Calu3 (cell line): ENCODE measurements at regions of chr21 and their contacts with region 1.

Region 1: DNA sequence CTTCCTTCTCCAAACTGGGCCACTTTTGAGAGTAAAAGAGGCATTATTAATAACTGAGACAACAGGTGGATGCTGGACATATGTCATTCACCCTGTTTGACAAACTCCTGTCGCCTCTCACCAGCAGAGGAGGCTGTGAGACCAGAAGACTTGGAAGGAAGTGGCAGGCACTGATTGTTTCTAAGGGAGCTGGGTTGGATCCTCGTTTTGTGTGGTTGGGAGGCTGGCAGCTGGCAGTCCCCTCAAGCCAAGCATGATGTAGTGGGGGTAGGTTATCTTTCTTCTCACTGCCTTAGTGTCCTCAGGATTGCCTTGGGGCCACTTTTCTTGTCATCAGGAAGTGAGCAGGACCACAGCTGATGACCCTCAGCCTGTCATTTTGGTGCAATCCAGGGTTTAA is 86.5 kb upstream of the KCNJ15 start:
- DNase-seq: peak; percentile 52
- H3K4me3 Mint-ChIP-seq: no peak overlapping the region
- H3K27ac Mint-ChIP-seq: no peak overlapping the region
- H3K4me1 Mint-ChIP-seq: peaks cover 27% of the 10 kb centered on the region
- H3K27me3 Mint-ChIP-seq: no peaks in the 10 kb centered on the region
- CTCF ChIP-seq: no peak

Region 2: GRCh38 chr21:38241029-38241740 is 70.9 kb after region 1 on chr21:
- CTCF ChIA-PET with region 1: interaction called, 4 read pairs
- intact Hi-C with region 1: loop called (anchors 2 kb)
- DNase-seq: peak; percentile 56
- H3K4me3 Mint-ChIP-seq: no peak overlapping the region
- H3K27ac Mint-ChIP-seq: peak overlapping the region; percentile 39
- H3K4me1 Mint-ChIP-seq: peaks cover 34% of the 10 kb centered on the region
- H3K27me3 Mint-ChIP-seq: no peaks in the 10 kb centered on the region
- CTCF ChIP-seq: no peak

Region 3: DNA sequence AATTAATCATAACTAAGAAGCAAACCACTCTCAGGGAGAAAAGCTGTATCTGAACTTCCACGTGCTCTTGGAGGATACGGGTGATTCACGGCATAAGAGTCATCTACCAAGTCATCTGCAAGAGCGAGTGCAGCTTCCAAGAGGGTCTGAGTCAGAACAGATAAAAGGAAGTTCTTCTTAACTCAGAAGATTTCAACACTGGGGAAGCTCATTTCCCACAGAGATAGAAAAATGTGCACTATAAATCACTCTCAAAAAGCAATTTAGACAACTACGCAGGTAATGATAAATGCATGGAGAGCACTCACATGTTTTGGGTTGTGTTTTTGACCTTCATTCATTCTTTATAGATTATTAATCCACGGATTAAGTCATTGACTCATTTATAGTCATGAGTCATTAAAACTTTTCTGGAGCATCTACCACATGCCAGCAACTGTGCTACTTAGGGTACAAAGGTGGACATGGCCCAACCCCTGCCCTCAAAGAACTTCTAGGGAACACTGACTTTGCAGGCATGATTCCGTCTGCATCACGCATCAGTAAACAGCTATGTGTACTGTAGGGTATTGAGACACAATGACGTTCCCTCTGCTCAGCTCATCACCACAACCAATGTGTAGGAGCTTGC is 107.3 kb after region 1 on chr21:
- CTCF ChIA-PET with region 1: no interaction called
- intact Hi-C with region 1: no loop called
- DNase-seq: no peak
- H3K4me3 Mint-ChIP-seq: no peak overlapping the region
- H3K27ac Mint-ChIP-seq: peak overlapping the region; percentile 39
- H3K4me1 Mint-ChIP-seq: peaks cover 26% of the 10 kb centered on the region
- H3K27me3 Mint-ChIP-seq: no peaks in the 10 kb centered on the region
- CTCF ChIP-seq: no peak